ENCODE measurements at regions of chr15 and their contacts with region 1.

Region 1: GRCh38 chr15:74793135-74794028 is 11.5 kb downstream of the CSK start:
- DNase-seq: no peak
- CTCF ChIP-seq: peak; percentile 63

Region 2: GRCh38 chr15:74808073-74808755 is 14.8 kb after region 1 on chr15:
- CTCF ChIA-PET with region 1: interaction called, 132 read pairs
- POLR2A ChIA-PET with region 1: no interaction called
- DNase-seq: no peak
- CTCF ChIP-seq: no peak

Region 3: GRCh38 chr15:74884428-74885223 is 91.2 kb after region 1 on chr15:
- CTCF ChIA-PET with region 1: interaction called, 11 read pairs
- POLR2A ChIA-PET with region 1: no interaction called
- DNase-seq: no peak
- CTCF ChIP-seq: no peak